Heart right ventricle (tissue), 16 donors: ENCODE measurements at regions of chr3 and their contacts with region 1.

Region 1: DNA sequence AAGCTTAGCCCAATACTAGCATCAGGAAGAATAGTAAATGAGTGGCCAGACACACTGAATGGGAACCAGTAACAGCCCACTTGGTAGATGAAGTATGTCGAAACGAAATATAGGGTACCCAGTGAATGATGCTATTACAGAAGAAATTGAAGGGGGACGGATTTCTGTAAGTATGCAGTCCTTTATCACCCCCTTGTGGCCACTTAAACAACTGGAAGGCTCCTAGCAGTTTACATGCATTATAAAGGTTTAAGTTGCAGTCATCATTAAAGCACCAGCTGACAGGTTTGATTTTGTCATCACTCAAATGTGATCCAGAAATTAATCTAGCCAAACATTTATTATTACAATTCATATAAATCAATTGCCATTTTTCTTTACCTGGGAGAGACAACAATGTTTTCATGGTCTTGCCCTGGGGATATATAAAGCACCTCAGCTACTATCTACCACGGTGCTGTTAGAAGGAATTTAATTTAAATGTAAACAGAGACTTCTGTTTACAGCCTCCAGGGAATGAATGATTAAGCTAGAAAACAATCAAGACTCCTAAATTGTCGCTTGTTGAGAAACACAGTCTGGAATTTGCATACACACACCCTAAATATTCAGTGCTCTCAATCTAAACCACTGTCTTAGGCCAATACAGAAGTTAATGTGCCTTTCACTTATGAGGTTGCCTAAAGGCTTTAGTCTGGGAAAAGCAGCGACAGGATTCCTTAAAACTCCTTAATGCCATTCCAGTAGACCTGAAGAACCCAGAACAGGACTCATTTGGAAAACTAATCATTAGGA is 7.8 kb downstream of the EIF1B start:
- DNase-seq: peak in 1 of 2 donors; percentile 52
- ATAC-seq: peak in 2 of 8 donors; percentile 29 to 34
- H3K4me3 ChIP-seq: no peak overlapping the region
- H3K27ac ChIP-seq: no peak overlapping the region
- H3K4me1 ChIP-seq: peaks cover 0 to 25% (median 20%) of the 10 kb centered on the region in 9 donors
- H3K27me3 ChIP-seq: no peaks in the 10 kb centered on the region
- CTCF ChIP-seq: peak; percentile 63 to 90 (median 82)

Region 2: GRCh38 chr3:39707314-39707909 is 609.8 kb before region 1 on chr3:
- intact Hi-C with region 1: loop called in 3 of 10 experiments (anchors 5 to 10 kb)
- DNase-seq: no peak
- ATAC-seq: peak in 1 of 8 donors; percentile 39
- H3K4me3 ChIP-seq: no peak overlapping the region
- H3K27ac ChIP-seq: no peak overlapping the region
- H3K4me1 ChIP-seq: no peaks in the 10 kb centered on the region
- H3K27me3 ChIP-seq: no peaks in the 10 kb centered on the region
- CTCF ChIP-seq: peak; percentile 32 to 78 (median 72)

Region 3: DNA sequence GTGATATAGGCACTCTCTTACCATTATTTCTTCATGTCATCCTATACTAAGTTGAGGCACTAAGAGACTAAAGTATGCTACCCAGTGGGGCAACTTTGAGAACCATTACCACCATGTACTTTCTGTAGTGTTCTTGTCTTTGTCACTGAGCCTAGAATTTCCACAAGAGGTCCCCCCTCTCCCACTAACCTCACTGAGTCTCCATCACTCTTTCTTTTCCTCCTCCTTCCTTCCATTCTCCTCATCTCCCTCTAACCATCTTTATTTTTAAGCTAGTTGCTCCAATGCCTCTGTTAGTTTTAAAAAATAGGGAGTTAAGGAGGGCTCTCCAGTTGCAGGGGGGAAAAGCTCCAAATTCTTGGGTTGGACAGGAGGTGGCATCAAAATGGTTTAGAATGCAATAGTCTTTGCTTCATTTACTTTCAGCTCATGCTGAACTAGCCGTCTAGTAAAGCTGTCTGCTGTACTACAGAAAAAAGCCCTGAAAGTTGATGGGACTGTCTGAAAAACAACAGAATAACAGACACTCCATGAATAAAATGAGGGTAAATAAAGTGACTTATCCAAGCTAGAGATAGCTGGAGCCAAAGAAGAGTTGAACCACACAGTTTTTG is 592.9 kb before region 1 on chr3:
- intact Hi-C with region 1: loop called in 2 of 10 experiments (anchors 5 to 10 kb)
- DNase-seq: no peak
- ATAC-seq: peak in 1 of 8 donors; percentile 37
- H3K4me3 ChIP-seq: no peak overlapping the region
- H3K27ac ChIP-seq: no peak overlapping the region
- H3K4me1 ChIP-seq: no peaks in the 10 kb centered on the region
- H3K27me3 ChIP-seq: no peaks in the 10 kb centered on the region
- CTCF ChIP-seq: peak in 8 of 9 donors; percentile 15 to 55 (median 48)

Region 4: DNA sequence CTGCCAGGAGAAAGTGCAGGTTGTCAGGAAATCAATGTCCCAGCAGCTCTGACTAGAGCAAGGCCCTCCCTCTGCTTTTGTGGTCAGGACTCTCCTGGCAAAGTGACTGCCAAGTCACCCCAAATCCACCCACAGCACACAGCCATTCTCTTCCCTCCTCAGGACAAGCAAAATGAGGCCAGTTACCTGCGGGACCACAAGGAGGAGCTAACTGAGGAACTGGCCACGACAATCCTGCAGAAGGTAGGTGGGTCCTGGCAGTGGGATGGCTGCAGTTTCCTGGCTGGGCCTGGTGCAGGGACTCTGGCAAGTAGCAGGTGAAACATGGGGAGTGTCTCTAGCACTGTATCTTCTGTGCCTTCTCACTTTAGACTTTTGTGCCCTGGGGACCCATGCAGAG is 150.3 kb before region 1 on chr3:
- intact Hi-C with region 1: no loop called
- DNase-seq: no peak
- ATAC-seq: no peak
- H3K4me3 ChIP-seq: no peak overlapping the region
- H3K27ac ChIP-seq: no peak overlapping the region
- H3K4me1 ChIP-seq: no peaks in the 10 kb centered on the region
- H3K27me3 ChIP-seq: no peaks in the 10 kb centered on the region
- CTCF ChIP-seq: no peak

Region 5: DNA sequence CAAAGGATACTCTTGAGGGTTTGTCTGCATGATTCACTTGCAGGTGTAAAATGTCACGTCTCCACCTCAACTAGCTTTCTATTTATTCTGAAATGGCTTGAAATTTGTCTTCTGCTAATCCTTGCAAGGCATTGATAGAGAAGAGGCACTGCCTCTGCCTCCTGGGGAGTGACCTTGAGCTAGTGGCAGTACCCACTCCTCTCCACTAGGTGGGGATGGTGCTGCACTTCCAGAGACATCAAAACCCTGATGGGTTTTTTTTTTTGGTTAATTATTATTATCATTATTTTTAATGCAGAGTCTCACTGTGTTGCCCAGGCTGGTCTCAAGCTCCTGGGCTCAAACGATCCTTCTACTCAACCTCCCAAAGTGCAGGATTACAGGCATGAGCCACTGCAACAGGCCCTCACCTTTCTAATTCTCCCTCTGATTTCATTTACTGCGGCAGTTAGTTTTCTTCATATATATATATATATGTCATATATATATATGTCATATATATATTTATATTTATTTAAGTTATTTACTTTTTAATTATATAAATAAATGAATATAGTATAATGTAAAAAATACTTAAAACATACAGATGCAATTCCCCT is 125.3 kb before region 1 on chr3:
- intact Hi-C with region 1: loop called (anchors 1 to 5 kb)
- DNase-seq: peak; percentile 37 to 41
- ATAC-seq: peak in 4 of 8 donors; percentile 54 to 69 (median 62)
- H3K4me3 ChIP-seq: no peak overlapping the region
- H3K27ac ChIP-seq: no peak overlapping the region
- H3K4me1 ChIP-seq: peaks cover 0 to 21% (median 5%) of the 10 kb centered on the region in 9 donors
- H3K27me3 ChIP-seq: no peaks in the 10 kb centered on the region
- CTCF ChIP-seq: peak; percentile 91 to 98 (median 95)

Region 6: GRCh38 chr3:40452876-40453730 is 135.8 kb after region 1 on chr3:
- intact Hi-C with region 1: loop called in 5 of 10 experiments (anchors 10 kb)
- DNase-seq: peak; percentile 96 to 98
- ATAC-seq: peak; percentile 94 to 98 (median 98)
- H3K4me3 ChIP-seq: peak overlapping the region; percentile 47 to 88 (median 68)
- H3K27ac ChIP-seq: peak overlapping the region; percentile 88 to 98 (median 94)
- H3K4me1 ChIP-seq: peaks cover 7 to 34% (median 28%) of the 10 kb centered on the region in 9 donors
- H3K27me3 ChIP-seq: no peaks in the 10 kb centered on the region
- CTCF ChIP-seq: peak in 2 of 9 donors; percentile 6 to 31

Region 7: DNA sequence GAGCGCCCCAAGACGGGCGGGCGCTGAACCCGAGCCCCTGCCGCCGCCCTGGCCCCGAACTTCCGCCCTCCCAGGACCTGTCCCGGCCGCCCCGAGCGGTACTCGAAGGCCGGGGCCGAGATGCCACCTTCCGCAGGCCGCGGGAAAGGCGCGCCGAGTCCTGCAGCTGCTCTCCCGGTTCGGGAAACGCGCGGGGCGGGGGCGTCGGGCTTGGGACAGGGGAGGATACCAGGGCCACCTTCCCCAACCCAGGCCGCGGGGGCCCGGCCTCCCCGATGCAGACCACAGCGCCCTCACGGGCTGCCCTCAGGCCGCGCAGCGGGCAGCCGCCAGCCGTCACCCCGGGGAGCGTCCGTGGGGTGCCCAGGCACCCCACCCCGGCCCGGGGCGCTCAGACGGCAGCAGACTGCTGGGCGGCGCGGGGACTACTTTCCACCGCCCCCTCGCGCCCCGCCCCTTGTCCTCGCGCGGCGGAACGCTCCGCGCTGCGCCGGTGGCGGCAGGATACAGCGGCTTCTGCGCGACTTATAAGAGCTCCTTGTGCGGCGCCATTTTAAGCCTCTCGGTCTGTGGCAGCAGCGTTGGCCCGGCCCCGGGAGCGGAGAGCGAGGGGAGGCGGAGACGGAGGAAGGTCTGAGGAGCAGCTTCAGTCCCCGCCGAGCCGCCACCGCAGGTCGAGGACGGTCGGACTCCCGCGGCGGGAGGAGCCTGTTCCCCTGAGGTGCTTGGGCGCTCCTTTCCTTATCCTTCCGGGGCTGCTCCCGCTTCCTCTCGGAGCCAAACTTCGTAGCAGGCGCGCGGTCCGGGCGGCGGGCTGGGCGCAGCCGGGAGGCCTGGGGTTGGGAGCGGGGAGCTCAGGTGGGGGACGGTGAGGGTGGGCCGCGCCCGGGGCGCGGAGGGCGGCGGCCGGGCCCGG is 882.0 kb after region 1 on chr3 and contains the start of gene CTNNB1:
- intact Hi-C with region 1: loop called in 1 of 10 experiments (anchors 10 kb)
- DNase-seq: peak; percentile 93 to 95
- ATAC-seq: peak; percentile 87 to 98 (median 93)
- H3K4me3 ChIP-seq: peak within 1 kb of the TSS; percentile 63 to 96 (median 80)
- H3K27ac ChIP-seq: peak within 1 kb of the TSS; percentile 89 to 99 (median 98)
- H3K4me1 ChIP-seq: peaks cover 0 to 42% (median 35%) of the 10 kb centered on the region in 9 donors
- H3K27me3 ChIP-seq: no peaks in the 10 kb centered on the region
- CTCF ChIP-seq: peak in 6 of 9 donors; percentile 7 to 43 (median 23)
- total RNA-seq, gene CTNNB1: 148 to 218 (median 181) TPM